T-cell (primary cell): ENCODE measurements at regions of chr7 and their contacts with region 1.

Region 1: DNA sequence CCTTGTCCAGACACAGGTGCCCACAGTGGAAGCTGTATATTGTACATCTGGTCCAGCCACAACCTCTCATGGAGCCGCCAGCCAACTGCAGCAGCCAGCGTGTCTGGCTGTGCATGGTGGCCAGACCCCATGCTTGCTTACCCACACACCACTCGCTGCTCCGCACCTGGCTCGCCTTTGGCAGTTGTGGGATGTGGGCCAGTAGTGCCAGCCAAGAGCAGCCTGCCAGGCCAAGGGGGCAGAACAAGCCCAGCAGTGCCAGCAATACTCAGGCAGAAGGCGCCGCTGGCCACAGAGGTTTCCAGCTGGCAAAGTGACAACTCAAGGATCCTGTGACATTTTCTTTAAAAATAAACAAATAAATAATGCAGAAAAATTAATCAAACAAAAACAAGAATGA is 11.7 kb upstream of the TMEM243 start:
- DNase-seq: no peak
- ATAC-seq: no peak
- H3K4me3 ChIP-seq: no peak overlapping the region
- H3K4me3 Mint-ChIP-seq: no peak overlapping the region
- H3K27ac ChIP-seq: no peak overlapping the region
- H3K27ac Mint-ChIP-seq: no peak overlapping the region
- H3K4me1 ChIP-seq: no peaks in the 10 kb centered on the region
- H3K4me1 Mint-ChIP-seq: peaks cover 2 to 11% (median 4%) of the 10 kb centered on the region in 3 donors
- H3K27me3 ChIP-seq: peaks cover 0 to 11% of the 10 kb centered on the region in 2 experiments
- H3K27me3 Mint-ChIP-seq: peaks cover 0 to 3% of the 10 kb centered on the region in 2 donors

Region 2: GRCh38 chr7:86926732-86927131 is 304.5 kb before region 1 on chr7:
- CTCF ChIA-PET with region 1: interaction called, 8 to 11 read pairs
- POLR2A ChIA-PET with region 1: no interaction called
- DNase-seq: peak in 21 of 35 experiments; percentile 5 to 67 (median 15)
- ATAC-seq: peak; percentile 47 to 69 (median 56)
- H3K4me3 ChIP-seq: no peak overlapping the region
- H3K4me3 Mint-ChIP-seq: no peak overlapping the region
- H3K27ac ChIP-seq: no peak overlapping the region
- H3K27ac Mint-ChIP-seq: no peak overlapping the region
- H3K4me1 ChIP-seq: no peaks in the 10 kb centered on the region
- H3K4me1 Mint-ChIP-seq: peaks cover 0 to 2% (median 0%) of the 10 kb centered on the region in 3 donors
- H3K27me3 ChIP-seq: no peaks in the 10 kb centered on the region
- H3K27me3 Mint-ChIP-seq: peaks cover 3 to 4% of the 10 kb centered on the region in 2 donors

Region 3: GRCh38 chr7:87219545-87220025 is 11.7 kb before region 1 on chr7 and contains the start of gene TMEM243:
- CTCF ChIA-PET with region 1: interaction called, 5 to 11 read pairs
- POLR2A ChIA-PET with region 1: interaction called in 1 of 2 experiments, 4 read pairs
- DNase-seq: peak; percentile 67 to 93 (median 84)
- ATAC-seq: peak; percentile 70 to 82 (median 80)
- H3K4me3 ChIP-seq: peak within 1 kb of the TSS; percentile 85 to 94
- H3K4me3 Mint-ChIP-seq: peak within 1 kb of the TSS; percentile 98 to 100 (median 100)
- H3K27ac ChIP-seq: peak within 1 kb of the TSS; percentile 89
- H3K27ac Mint-ChIP-seq: peak within 1 kb of the TSS; percentile 98 to 100
- H3K4me1 ChIP-seq: peaks cover 31 to 43% of the 10 kb centered on the region in 2 experiments
- H3K4me1 Mint-ChIP-seq: peaks cover 43 to 55% (median 46%) of the 10 kb centered on the region in 3 donors
- H3K27me3 ChIP-seq: peaks cover 2 to 4% of the 10 kb centered on the region in 2 experiments
- H3K27me3 Mint-ChIP-seq: no peaks in the 10 kb centered on the region
- total RNA-seq, gene TMEM243: 95.2 to 170 (median 108) TPM